Caco-2 (cell line): ENCODE measurements at regions of chr20 and their contacts with region 1.

Region 1: DNA sequence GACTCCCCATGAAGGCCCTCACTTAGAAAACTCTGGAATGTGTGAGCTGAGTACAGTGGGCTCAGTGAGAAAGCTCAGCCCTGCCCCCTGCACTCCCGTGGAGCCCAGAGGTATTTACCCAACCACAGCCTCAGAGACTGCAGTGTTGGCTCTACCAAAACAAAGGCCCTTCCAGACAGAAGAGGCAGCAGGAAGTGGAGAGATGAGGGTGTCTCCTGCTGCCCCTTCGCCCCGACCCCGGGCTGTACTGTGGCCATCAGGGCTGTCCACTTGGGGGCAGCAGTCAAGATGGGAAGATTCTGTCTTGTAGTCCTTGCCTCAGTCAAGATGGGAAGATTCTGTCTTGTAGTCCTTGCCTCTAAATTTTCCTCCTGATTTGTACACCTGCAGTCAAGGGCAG is 341.3 kb downstream of the TAF4 start:
- DNase-seq: peak in 1 of 2 experiments; percentile 47
- H3K4me3 ChIP-seq: no peak overlapping the region
- H3K4me3 Mint-ChIP-seq: no peak overlapping the region
- H3K27ac Mint-ChIP-seq: no peak overlapping the region
- H3K4me1 ChIP-seq: no peaks in the 10 kb centered on the region
- H3K4me1 Mint-ChIP-seq: no peaks in the 10 kb centered on the region
- H3K27me3 ChIP-seq: no peaks in the 10 kb centered on the region; the same call in 1 of the 2 replicates
- H3K27me3 Mint-ChIP-seq: peaks cover 17% of the 10 kb centered on the region
- CTCF ChIP-seq: peak; percentile 44 to 52

Region 2: DNA sequence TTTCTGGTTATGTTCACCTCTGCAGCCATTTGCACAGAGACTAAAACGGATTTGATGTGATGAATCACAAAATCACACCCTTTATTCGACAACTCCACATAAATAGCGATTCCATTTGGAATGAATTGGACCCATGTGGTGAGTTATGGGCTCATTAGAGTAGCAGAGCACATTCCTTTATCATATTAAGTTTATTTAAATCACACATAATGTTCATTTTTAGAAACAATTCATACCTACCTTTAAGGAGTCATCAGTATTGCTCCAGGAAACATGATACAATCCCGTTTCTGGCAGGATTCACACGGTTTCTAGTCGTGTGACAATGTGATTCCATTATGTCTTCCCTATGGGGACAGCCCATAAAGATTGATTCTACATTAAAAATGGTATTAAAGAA is 168.8 kb before region 1 on chr20:
- CTCF ChIA-PET with region 1: no interaction called
- POLR2A ChIA-PET with region 1: no interaction called
- intact Hi-C with region 1: no loop called
- DNase-seq: no peak
- H3K4me3 ChIP-seq: no peak overlapping the region
- H3K4me3 Mint-ChIP-seq: no peak overlapping the region
- H3K27ac Mint-ChIP-seq: no peak overlapping the region
- H3K4me1 ChIP-seq: no peaks in the 10 kb centered on the region
- H3K4me1 Mint-ChIP-seq: no peaks in the 10 kb centered on the region
- H3K27me3 ChIP-seq: no peaks in the 10 kb centered on the region
- H3K27me3 Mint-ChIP-seq: peaks cover 22% of the 10 kb centered on the region
- CTCF ChIP-seq: no peak

Region 3: DNA sequence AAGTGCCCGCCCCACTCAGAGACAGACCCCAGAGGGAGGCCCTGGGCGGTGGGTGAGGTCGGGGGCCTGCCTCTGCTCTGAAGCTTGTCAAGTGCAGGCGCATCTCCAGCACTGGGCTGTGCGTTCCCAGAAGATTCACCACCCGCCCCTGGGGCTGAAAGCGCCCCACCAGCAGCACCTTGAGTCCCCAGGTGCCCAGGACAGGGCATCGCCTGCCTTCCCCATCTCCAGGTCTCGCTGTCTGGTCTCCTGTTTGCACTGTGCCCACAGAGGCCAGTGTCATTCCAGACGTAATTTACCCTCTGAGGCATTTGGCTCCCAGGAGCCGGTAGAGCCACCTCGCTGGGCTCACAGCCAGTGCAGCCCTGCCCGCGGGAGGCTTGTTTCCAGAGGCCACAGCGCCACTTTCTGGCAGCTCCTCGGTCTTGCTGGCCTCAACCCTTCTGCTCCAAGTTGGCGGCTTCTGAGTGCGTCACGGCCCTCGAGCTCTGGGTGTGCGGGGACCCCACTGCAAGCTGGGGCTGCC is 150.2 kb after region 1 on chr20:
- CTCF ChIA-PET with region 1: no interaction called
- POLR2A ChIA-PET with region 1: no interaction called
- intact Hi-C with region 1: loop called (anchors 5 kb)
- DNase-seq: peak in 1 of 2 experiments; percentile 63
- H3K4me3 ChIP-seq: no peak overlapping the region
- H3K4me3 Mint-ChIP-seq: no peak overlapping the region
- H3K27ac Mint-ChIP-seq: no peak overlapping the region
- H3K4me1 ChIP-seq: no peaks in the 10 kb centered on the region
- H3K4me1 Mint-ChIP-seq: no peaks in the 10 kb centered on the region
- H3K27me3 ChIP-seq: peaks cover 5% of the 10 kb centered on the region
- H3K27me3 Mint-ChIP-seq: peaks cover 42% of the 10 kb centered on the region
- CTCF ChIP-seq: peak in 1 of 2 experiments; percentile 22